WTC11 (cell line): ENCODE measurements at regions of chr2 and their contacts with region 1.

Region 1: GRCh38 chr2:146927080-146927711 is 917.6 kb upstream of the ACVR2A start:
- DNase-seq: peak; percentile 71
- ATAC-seq: peak; percentile 97
- H3K4me3 Mint-ChIP-seq: no peak overlapping the region
- H3K27ac Mint-ChIP-seq: no peak overlapping the region
- H3K4me1 Mint-ChIP-seq: peaks cover 9% of the 10 kb centered on the region; the same call in 1 of the 2 replicates
- H3K27me3 Mint-ChIP-seq: no peaks in the 10 kb centered on the region
- CTCF ChIP-seq: no peak

Region 2: GRCh38 chr2:146734042-146734820 is 193.0 kb before region 1 on chr2:
- CTCF ChIA-PET with region 1: interaction called, 12 read pairs
- POLR2A ChIA-PET with region 1: no interaction called
- DNase-seq: no peak
- ATAC-seq: peak; percentile 90
- H3K4me3 Mint-ChIP-seq: no peak overlapping the region
- H3K27ac Mint-ChIP-seq: no peak overlapping the region
- H3K4me1 Mint-ChIP-seq: peaks cover 6% of the 10 kb centered on the region
- H3K27me3 Mint-ChIP-seq: no peaks in the 10 kb centered on the region
- CTCF ChIP-seq: peak; percentile 29; the same call in 1 of the 2 replicates

Region 3: DNA sequence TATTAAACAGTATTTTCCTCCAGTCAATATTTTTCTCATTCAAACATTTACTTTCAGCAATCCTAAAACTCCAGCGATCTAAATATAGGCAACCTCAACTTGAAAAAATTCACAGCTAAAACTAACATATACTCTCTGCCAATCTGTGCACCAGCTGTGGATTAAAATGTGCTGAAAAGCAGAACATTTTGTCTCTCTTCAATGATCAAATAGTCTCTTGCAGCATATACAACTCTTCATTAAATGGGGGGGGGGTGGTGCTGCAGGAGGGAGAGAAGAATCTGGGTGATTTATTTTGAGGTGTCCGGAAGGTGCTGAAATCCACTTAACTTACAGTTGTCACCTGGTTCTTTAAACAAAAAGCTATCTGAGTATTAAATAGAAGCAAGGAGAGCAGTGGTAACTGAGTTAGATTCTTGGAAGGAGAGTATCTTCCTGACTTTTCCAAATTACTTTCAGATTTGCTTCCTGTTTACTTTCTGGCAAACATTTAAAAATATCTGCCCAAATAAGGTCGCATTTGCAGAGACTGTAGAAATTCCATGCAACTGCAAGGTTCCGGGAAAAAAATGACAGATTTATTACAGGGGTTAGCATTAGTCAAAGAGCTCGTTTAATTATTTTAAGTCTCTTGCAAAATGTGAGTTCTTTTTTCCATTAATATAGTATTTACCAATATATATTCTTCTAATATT is 12.9 kb after region 1 on chr2:
- CTCF ChIA-PET with region 1: no interaction called
- POLR2A ChIA-PET with region 1: no interaction called
- DNase-seq: no peak
- ATAC-seq: no peak
- H3K4me3 Mint-ChIP-seq: no peak overlapping the region
- H3K27ac Mint-ChIP-seq: no peak overlapping the region; the same call in 1 of the 2 replicates
- H3K4me1 Mint-ChIP-seq: peaks cover 4% of the 10 kb centered on the region
- H3K27me3 Mint-ChIP-seq: no peaks in the 10 kb centered on the region
- CTCF ChIP-seq: no peak

Region 4: DNA sequence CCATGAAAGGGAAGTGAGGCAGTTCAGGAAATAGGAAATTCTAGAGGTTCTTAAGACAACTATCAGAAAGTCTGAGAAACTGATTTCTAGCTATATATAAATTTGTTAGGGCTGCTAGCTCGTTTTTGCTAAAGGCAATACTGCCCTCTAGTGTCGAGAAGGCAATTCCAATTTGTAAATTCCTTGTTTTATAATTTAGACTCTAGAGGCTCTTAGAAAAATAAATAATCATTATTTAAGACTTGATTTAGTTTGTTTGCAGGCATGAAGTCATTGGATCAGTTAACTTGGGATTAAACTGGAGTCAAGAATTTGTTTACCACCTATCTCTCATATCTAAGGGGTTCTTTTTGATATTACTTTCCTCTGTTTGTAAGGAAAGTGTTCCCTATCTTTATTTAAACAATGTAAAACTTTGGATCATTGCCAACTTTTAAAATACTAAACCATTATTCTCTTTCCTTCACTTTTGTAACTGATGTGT is 983.8 kb after region 1 on chr2:
- CTCF ChIA-PET with region 1: interaction called, 10 read pairs
- POLR2A ChIA-PET with region 1: no interaction called
- DNase-seq: no peak
- ATAC-seq: no peak
- H3K4me3 Mint-ChIP-seq: no peak overlapping the region
- H3K27ac Mint-ChIP-seq: no peak overlapping the region
- H3K4me1 Mint-ChIP-seq: no peaks in the 10 kb centered on the region
- H3K27me3 Mint-ChIP-seq: no peaks in the 10 kb centered on the region
- CTCF ChIP-seq: peak; percentile 55